ENCODE measurements at regions of chr19 and their contacts with region 1.

Region 1: DNA sequence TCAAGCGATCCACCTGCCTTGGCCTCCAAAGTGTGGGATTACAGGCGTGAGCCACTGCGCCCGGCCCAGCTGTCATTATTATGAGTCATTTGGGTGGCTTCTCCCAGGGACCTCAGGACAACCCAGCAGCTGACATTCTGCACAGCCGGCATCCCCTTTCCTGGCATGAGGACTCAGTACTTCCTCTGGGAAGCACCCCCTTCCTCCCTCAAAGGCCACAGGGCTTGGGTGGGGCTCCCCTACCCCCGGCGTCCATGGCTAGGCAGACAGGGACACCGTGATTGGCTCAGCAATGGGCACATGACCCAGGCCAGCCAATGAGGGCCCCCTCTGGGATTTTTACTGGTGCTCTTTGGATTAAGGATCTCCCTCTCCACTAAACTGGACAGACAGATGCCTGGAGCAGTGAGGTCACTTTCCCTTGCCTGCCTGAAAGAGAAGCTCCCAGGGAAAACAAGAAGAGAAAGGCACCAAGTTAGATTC is 6.0 kb downstream of the KANK2 start:
- DNase-seq: peak; percentile 86

Region 2: DNA sequence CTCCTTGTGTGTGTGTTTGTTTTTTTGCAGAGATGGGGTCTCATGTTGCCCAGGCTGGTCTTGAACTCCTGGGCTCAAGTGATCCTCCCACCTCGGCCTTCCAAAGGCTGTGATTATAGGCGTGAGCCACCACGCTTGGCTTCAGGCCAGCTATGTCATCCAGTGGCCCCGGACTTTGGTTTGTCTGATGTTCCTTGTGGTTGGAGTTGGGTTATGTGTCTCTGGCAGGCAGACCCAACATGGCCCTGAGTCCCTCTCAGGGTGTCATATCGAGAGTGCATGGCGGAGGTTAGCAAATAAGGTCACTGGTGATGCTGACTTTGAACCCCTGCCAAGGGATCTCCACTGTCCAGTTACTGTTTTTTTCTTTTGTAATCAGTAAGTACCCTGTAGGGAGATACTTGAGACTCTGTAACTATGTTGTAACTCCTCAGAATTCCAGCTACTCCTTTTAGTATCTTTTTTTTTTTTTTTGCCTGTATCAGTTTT is 193.2 kb before region 1 on chr19:
- intact Hi-C with region 1: no loop called
- DNase-seq: no peak

Region 3: DNA sequence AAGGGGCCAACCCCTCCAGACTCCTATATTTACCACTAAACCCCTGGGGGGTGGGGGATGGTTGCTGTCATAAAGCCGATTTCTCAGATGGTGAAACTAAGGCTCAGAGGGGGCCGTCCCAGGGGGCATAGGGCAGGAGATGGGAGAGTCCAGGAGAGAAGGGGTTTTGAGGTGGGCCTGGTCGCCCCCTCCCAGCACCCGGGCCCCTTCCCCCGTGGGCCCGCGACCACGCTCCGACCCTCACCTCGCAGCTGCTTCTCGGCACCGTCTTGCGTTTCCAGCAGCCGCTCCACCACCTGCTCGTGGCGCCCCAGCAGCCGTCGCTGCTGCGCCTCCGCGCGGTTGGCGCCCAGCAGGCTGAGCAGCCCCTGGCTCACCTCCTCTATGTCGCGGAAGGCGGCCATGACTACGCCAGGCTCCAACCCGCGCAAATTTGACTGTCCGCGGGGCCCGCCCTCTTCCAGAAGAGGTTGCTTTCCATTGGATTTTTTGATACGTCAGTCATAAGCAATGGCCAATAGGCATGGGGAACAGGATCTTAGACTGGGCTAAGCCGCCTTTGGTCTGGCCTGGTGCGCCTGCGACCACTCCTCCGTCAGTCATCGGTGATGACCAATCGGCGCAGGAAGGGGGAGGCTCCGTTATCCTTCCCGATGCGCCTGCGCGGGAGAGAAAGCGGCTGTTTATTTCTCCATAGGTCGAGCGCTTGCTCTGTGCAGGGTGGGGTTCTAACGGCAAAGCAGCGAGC is 35.8 kb before region 1 on chr19 and contains the start of gene SPC24:
- intact Hi-C with region 1: loop called (anchors 2 kb)
- DNase-seq: peak; percentile 98
- total RNA-seq, gene SPC24: 3.8 TPM

Region 4: GRCh38 chr19:11355160-11356073 is 164.1 kb after region 1 on chr19 and contains the start of gene PLPPR2:
- intact Hi-C with region 1: no loop called
- DNase-seq: peak; percentile 97
- total RNA-seq, gene PLPPR2: 19.3 TPM